Lower leg skin (tissue), 4 donors: ENCODE measurements at regions of chr5 and their contacts with region 1.

Region 1: GRCh38 chr5:122091936-122092600 is 14.0 kb upstream of the LOX start:
- DNase-seq: no peak
- H3K4me3 ChIP-seq: no peak overlapping the region
- CTCF ChIP-seq: no peak
- POLR2A ChIP-seq: no peak

Region 2: DNA sequence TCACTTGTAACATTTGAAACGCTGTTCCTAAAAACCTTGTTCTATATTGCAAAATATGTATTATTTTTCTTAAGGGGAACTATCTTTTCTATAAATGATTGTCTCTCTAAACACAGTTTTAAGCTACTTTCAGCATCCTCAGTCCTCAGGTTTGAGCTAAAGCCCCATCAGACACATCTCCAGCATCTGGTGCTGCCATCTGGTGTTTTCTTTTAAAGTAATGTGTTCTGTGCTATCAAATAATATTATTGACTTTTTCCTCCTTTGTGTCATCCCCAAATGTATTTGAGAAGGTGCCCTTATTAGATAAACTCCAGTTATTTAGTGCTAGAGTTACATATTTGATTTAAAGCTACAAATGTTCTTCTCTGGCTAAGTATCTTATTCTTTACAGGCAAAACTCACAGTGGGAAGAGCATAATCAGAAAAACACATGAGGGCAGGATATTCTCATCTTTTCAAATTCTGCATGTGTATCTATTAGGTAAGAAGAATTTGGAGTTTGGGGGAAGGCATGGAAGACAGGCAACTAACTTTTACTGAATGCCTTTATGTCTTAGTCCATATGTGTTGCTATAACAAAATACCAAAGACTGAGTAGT is 64.8 kb after region 1 on chr5:
- intact Hi-C with region 1: loop called (anchors 10 kb)
- DNase-seq: no peak
- H3K4me3 ChIP-seq: no peak overlapping the region
- CTCF ChIP-seq: no peak
- POLR2A ChIP-seq: no peak